BJ (cell line): ENCODE measurements at regions of chr1 and their contacts with region 1.

Region 1: DNA sequence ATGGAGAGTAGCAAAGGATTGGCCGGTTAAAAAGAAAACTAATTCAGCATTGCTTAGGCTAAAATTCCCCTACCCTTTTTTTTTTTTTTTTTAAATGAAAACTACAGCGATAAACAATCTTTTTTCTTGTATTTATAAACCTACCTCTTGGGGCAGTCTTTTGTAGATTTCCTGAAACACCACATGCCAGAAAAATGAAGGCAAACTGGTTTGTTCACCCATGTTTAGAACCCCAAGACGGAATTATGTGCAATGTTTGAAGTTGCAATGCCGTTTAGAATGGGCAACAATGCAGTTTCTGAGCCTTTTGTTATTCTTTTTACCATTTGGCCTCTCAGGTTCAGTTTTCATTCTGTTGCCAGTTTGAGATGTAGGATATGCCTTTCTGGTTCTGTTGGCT is 59.1 kb downstream of the PRDM2 start:
- DNase-seq: no peak
- H3K4me3 ChIP-seq: no peak overlapping the region
- H3K27me3 ChIP-seq: no peaks in the 10 kb centered on the region
- CTCF ChIP-seq: 0 out of 2 replicates have a peak, but pooled peaks have one; percentile 6

Region 2: DNA sequence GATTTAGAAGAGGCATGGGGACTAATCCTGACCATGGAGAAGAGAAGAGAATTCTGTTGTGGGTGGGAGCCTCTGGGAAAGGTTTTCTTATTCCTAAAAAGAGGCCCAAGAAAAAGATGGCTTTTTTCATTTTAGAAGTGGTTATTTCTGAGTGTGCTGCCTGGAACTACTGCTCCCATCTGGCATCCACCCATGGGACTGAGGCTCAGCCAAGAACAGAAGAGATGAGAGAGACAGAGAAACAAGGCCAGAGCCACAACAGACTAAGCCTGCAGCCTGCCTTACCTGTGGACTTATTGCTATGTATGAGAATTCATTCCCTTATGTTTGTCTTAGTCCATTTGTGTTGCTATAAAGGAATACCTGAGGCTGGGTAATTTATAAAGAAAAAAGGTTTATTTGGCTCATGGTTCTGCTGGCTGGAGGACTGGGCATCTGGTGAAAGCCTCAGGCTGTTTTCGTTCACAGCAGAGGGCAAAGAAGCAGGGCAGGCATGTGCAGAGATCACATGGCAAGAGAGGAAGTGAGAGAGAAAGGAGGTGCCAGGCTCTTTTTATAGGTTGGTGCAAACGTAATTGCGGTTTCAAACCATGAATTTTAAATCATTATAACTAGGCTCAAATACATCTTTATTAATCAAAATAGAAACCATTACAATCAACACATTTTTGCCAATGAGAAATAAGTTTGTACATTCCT is 116.6 kb before region 1 on chr1:
- CTCF ChIA-PET with region 1: no interaction called
- POLR2A ChIA-PET with region 1: no interaction called
- DNase-seq: no peak
- H3K4me3 ChIP-seq: no peak overlapping the region
- H3K27me3 ChIP-seq: no peaks in the 10 kb centered on the region
- CTCF ChIP-seq: no peak

Region 3: DNA sequence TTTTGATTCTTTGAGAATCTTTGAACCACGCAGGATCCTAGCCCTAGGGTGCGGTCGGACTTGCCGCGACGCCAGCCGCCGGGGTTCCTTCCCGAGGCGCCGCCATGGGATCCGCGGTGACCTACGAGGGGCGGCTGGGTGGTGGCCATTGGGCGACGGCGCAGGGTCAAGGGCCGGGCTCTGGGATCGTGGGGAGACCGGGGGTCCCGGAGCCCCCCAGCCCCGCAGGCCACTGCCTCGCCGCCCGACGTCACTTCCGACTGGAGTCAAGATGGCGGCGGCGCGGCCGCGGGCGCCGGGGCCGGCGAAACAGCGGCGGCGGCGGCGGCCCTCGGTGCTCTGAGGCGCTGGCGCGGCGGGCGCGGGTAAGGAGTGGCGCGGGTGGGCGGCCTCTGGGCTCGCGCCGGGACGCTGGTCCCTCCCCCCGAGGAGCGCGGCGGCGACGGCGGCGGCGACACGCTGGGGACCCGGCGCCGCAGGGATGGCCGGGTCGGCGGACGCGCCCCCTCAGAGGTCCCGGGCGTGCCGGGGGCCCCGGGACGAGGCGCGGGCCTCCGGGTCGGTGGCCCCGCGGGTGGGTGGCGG is 59.1 kb before region 1 on chr1 and contains the start of gene PRDM2:
- CTCF ChIA-PET with region 1: no interaction called
- POLR2A ChIA-PET with region 1: no interaction called
- DNase-seq: no peak
- H3K4me3 ChIP-seq: peak within 1 kb of the TSS; percentile 75
- H3K27me3 ChIP-seq: no peaks in the 10 kb centered on the region
- CTCF ChIP-seq: no peak
- polyA plus RNA-seq, gene PRDM2: 9.6 and 11.6 TPM in 2 replicates

Region 4: GRCh38 chr1:13774136-13774535 is 15.0 kb after region 1 on chr1:
- CTCF ChIA-PET with region 1: no interaction called
- POLR2A ChIA-PET with region 1: interaction called, 11 read pairs
- DNase-seq: no peak
- H3K4me3 ChIP-seq: no peak overlapping the region
- H3K27me3 ChIP-seq: no peaks in the 10 kb centered on the region
- CTCF ChIP-seq: no peak

Region 5: GRCh38 chr1:13790290-13791030 is 31.4 kb after region 1 on chr1:
- CTCF ChIA-PET with region 1: interaction called, 3 read pairs
- POLR2A ChIA-PET with region 1: interaction called, 10 read pairs
- DNase-seq: no peak
- H3K4me3 ChIP-seq: no peak overlapping the region
- H3K27me3 ChIP-seq: no peaks in the 10 kb centered on the region
- CTCF ChIP-seq: no peak